Ovary (tissue), 10 donors: ENCODE measurements at regions of chr15 and their contacts with region 1.

Region 1: DNA sequence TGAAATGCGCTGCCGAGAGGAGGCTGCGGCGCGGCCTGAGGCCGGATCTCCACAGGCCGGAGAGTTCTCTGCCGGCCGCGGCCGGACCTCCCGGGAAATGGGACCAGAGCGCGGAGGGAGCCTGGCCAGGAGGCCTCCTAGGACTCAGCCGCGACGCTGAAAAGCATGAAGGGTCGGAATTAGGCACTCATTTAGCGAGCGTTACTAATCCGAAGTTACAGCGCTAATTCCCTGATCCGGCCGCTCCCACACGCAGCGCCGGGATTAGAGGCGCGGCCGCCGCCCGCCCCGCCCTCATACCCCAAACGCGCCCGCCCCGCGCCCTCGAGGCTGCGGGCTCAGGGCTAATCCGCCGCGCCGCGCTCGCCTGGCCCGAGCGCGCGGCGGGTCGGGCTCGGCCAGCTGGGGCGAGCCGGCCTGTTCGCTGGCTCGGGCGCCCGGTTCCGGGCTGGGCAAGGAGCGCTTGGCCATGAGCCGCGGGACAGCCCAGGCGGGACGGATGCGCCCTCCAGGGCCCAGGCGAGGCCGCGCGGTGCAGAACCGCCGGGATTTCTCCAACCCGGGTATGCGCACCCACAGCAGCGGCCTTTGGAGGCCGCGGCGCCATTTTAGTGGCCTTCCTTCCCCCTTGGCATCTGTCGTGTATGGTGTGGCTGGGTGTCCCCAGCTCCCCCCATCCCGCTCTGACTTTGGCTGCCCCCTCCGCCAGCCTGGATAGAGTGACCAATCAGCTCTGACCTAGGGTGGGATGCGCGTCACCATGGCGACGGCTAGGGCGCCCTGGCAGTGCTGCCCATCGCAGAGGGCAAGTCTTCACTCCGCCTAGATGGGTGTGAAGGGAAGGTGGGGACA is 36.8 kb upstream of the POLG start:
- DNase-seq: no peak
- H3K4me3 ChIP-seq: no peak overlapping the region
- H3K27ac ChIP-seq: no peak overlapping the region
- H3K4me1 ChIP-seq: no peaks in the 10 kb centered on the region
- H3K27me3 ChIP-seq: no peaks in the 10 kb centered on the region
- CTCF ChIP-seq: no peak
- EP300 ChIP-seq: no peak
- POLR2A ChIP-seq: no peak

Region 2: DNA sequence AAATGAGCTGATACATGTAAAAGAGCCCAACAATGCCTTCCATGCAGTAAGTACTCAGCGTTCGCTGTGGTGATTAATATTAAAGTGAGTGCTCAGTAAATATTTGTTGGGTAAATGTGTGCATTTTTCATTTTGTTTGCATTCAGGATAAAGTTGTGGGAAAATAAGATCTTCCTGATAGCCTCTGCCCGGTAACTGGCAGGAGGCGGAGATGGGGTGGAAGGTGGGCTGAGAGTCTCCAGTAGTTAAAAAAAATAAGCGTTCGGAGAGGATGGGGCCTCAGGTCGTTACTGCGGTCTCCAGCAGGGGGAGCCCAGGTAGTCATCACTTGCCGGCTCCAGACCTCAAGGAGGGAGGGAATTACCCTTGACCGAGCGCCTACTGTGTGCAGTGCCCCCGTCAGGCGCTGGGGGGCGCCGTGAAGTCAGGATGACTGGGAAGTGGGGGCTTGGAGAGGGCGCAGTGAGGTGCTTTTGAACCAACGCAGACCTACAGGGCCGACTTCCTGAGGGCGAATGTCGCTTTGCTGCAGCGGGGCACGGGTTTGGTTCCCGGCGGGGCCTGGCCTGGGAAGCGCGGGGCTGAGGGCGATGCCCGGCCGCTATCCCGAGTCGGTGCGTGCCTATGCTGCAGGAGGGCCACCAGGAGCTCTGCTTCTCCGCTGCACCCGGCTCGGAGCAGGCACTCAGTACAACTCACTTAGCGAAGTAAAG is 44.8 kb after region 1 on chr15:
- intact Hi-C with region 1: loop called in 1 of 4 experiments (anchors 5 kb)
- DNase-seq: peak in 3 of 5 donors; percentile 22 to 41 (median 24)
- H3K4me3 ChIP-seq: no peak overlapping the region
- H3K27ac ChIP-seq: no peak overlapping the region
- H3K4me1 ChIP-seq: no peaks in the 10 kb centered on the region
- H3K27me3 ChIP-seq: no peaks in the 10 kb centered on the region
- CTCF ChIP-seq: no peak
- EP300 ChIP-seq: no peak
- POLR2A ChIP-seq: no peak

Region 3: GRCh38 chr15:89485855-89486361 is 114.5 kb after region 1 on chr15:
- intact Hi-C with region 1: no loop called
- DNase-seq: no peak
- H3K4me3 ChIP-seq: no peak overlapping the region
- H3K27ac ChIP-seq: no peak overlapping the region
- H3K4me1 ChIP-seq: no peaks in the 10 kb centered on the region
- H3K27me3 ChIP-seq: no peaks in the 10 kb centered on the region
- CTCF ChIP-seq: no peak
- EP300 ChIP-seq: no peak
- POLR2A ChIP-seq: no peak